ENCODE measurements at regions of chr16 and their contacts with region 1.

Region 1: DNA sequence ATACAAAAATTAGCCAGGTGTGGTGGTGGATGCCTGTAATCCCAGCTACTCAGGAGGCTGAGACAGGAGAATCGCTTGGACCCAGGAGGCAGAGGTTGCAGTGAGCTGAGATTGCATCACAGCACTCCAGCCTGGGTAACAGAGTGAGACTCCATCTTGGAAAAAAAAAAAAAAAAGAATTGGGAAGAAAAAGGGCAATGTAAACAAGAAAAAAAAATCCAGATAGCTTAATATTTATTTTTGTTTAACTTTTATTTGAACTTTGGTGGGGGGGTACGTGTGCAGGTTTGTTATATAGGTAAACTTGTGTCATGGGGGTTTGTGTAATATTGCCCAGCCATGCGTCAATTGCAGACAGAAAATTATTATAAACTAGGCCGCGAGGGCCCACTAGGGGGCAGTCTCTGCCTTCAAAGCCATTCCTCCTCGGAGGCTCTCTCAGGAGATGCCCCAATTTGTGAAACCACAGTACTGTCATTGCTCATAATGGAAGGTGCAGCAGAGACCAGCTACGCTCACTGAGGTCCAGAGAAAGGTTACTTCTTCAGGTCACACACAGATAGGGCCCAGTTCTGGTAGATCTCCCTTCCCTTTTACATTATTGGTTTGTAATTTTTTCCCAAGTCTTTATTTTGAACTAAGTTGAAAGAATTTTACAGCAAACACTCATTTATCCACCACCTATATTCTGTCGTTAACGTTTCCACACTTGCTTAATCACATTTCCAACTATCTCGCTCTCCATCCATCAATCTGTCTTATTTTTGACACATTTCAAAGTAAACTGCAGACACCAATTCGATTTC is 206.2 kb downstream of the PRKCB start:
- DNase-seq: peak; percentile 73 to 77 (median 76)
- ATAC-seq: peak; percentile 92
- H3K4me3 ChIP-seq: no peak overlapping the region
- H3K27ac ChIP-seq: no peak overlapping the region
- H3K4me1 ChIP-seq: no peaks in the 10 kb centered on the region
- H3K27me3 ChIP-seq: no peaks in the 10 kb centered on the region
- CTCF ChIP-seq: peak; percentile 65 to 88 (median 83)
- EP300 ChIP-seq: no peak
- POLR2A ChIP-seq: no peak
- RAD21 ChIP-seq: peak; percentile 73 to 80

Region 2: GRCh38 chr16:24253192-24253591 is 211.2 kb after region 1 on chr16:
- CTCF ChIA-PET with region 1: interaction called, 3 read pairs
- POLR2A ChIA-PET with region 1: no interaction called
- in situ Hi-C with region 1: no loop called
- intact Hi-C with region 1: loop called (anchors 5 kb)
- DNase-seq: peak; percentile 63 to 73 (median 67)
- ATAC-seq: peak; percentile 89
- H3K4me3 ChIP-seq: no peak overlapping the region
- H3K27ac ChIP-seq: no peak overlapping the region
- H3K4me1 ChIP-seq: peaks cover 0 to 8% of the 10 kb centered on the region in 2 experiments; a peak in 1 of 5 replicates
- H3K27me3 ChIP-seq: peaks cover 5 to 12% of the 10 kb centered on the region in 2 experiments; a peak in 2 of 5 replicates
- CTCF ChIP-seq: peak; percentile 61 to 75 (median 71)
- EP300 ChIP-seq: no peak
- POLR2A ChIP-seq: no peak
- RAD21 ChIP-seq: peak; percentile 46 to 75

Region 3: DNA sequence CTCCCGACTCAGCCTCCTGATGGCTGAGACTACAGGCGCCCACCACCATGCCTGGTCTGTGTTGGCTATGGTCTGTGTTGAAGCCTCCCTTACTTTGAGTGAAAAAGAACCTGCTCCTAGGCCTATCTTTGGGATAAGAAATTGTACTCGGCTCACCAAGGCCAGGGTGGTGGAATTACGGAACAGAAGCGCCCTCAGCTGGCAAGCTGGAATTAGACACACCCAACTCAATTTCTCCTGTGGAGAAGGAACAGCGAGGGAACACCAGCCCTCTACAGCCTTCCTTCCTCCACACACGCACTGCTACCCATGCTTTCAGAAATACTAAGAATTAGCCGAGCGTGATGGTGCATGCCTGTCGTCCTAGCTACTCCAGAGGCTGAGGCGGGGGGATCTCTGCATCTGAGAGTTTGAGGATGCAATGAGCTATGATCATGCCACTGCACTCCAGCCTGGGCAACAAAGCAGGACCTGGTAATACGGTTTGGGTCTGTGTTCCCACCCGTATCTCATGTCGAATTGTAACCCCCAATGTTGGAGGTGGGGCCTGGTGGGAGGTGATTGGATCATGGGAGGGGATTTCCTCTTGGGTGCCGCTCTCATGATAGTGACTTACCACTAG is 457.3 kb after region 1 on chr16:
- CTCF ChIA-PET with region 1: interaction called, 21 read pairs
- POLR2A ChIA-PET with region 1: interaction called, 4 read pairs
- in situ Hi-C with region 1: loop called (anchors 5 kb)
- intact Hi-C with region 1: loop called (anchors 1 kb)
- DNase-seq: peak; percentile 44 to 71 (median 58)
- ATAC-seq: peak; percentile 96
- H3K4me3 ChIP-seq: no peak overlapping the region
- H3K27ac ChIP-seq: no peak overlapping the region
- H3K4me1 ChIP-seq: peaks cover 0 to 3% of the 10 kb centered on the region in 2 experiments; a peak in 1 of 5 replicates
- H3K27me3 ChIP-seq: peaks cover 3 to 10% of the 10 kb centered on the region in 2 experiments; a peak in 3 of 5 replicates
- CTCF ChIP-seq: peak; percentile 81 to 92 (median 83)
- EP300 ChIP-seq: no peak
- POLR2A ChIP-seq: no peak
- RAD21 ChIP-seq: peak; percentile 76 to 92

Region 4: GRCh38 chr16:24504472-24505345 is 462.7 kb after region 1 on chr16:
- CTCF ChIA-PET with region 1: interaction called, 21 read pairs
- POLR2A ChIA-PET with region 1: interaction called, 4 read pairs
- in situ Hi-C with region 1: loop called (anchors 5 kb)
- intact Hi-C with region 1: loop called (anchors 1 kb)
- DNase-seq: peak; percentile 70 to 80 (median 72)
- ATAC-seq: peak; percentile 98
- H3K4me3 ChIP-seq: no peak overlapping the region
- H3K27ac ChIP-seq: no peak overlapping the region
- H3K4me1 ChIP-seq: peaks cover 6 to 9% of the 10 kb centered on the region in 2 experiments; a peak in 3 of 5 replicates
- H3K27me3 ChIP-seq: peaks cover 3 to 16% of the 10 kb centered on the region in 2 experiments; a peak in 2 of 5 replicates
- CTCF ChIP-seq: peak; percentile 83 to 92 (median 86)
- EP300 ChIP-seq: no peak
- POLR2A ChIP-seq: no peak
- RAD21 ChIP-seq: peak; percentile 65 to 83